ENCODE measurements at regions of chr10 and their contacts with region 1.

Region 1: DNA sequence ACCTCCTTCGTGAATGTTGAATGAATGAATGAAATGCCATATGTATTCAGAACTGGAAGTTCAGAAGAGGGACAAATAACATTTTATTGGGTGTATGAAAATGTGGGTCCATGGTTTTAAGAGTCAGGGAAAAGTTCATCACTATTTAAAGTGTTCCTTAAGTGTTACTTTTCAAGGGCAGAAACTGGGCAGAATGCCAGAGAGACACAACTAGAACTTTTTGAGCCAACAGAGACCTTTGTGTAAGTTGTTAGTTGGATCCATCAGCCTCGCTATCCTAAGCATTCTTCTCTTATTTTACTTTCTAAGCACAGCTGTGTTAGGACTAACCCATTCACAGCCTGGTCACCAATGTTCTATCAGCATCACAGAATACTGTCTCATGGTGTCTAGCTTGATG is 13.6 kb upstream of the TAF3 start:
- DNase-seq: no peak
- ATAC-seq: no peak
- H3K4me3 ChIP-seq: no peak overlapping the region
- H3K27ac ChIP-seq: no peak overlapping the region
- H3K4me1 ChIP-seq: no peaks in the 10 kb centered on the region
- H3K27me3 ChIP-seq: no peaks in the 10 kb centered on the region
- CTCF ChIP-seq: no peak

Region 2: DNA sequence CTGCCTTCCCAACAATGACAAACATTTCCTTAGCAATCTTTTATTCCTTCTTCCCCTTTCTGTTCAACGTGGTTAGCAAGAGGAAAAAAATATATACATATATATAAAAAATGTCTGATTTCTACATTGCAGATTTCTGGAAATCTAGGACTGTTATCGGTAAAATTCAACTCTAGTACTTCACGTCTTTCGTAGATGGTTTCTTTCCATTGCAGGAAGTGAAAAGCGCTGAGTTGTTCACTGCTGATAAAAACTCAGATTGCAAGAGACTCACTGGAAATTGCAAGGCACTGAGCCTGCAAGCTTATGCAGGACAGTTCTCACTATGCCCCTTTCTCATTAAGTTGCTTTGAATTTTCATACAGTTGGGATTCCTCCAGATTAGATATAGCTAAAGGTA is 40.8 kb before region 1 on chr10:
- intact Hi-C with region 1: loop called in 1 of 2 experiments (anchors 5 kb)
- DNase-seq: no peak
- ATAC-seq: no peak
- H3K4me3 ChIP-seq: no peak overlapping the region
- H3K27ac ChIP-seq: no peak overlapping the region
- H3K4me1 ChIP-seq: no peaks in the 10 kb centered on the region
- H3K27me3 ChIP-seq: no peaks in the 10 kb centered on the region
- CTCF ChIP-seq: no peak

Region 3: GRCh38 chr10:7773845-7774801 is 30.6 kb before region 1 on chr10:
- intact Hi-C with region 1: no loop called
- DNase-seq: no peak
- ATAC-seq: no peak
- H3K4me3 ChIP-seq: no peak overlapping the region
- H3K27ac ChIP-seq: no peak overlapping the region
- H3K4me1 ChIP-seq: no peaks in the 10 kb centered on the region
- H3K27me3 ChIP-seq: no peaks in the 10 kb centered on the region
- CTCF ChIP-seq: no peak